ENCODE measurements at regions of chr17 and their contacts with region 1.

Region 1: GRCh38 chr17:67258821-67259468 is 13.9 kb upstream of the HELZ start:
- DNase-seq: no peak
- ATAC-seq: peak; percentile 34
- H3K4me3 Mint-ChIP-seq: peak overlapping the region; percentile 70
- H3K27ac Mint-ChIP-seq: peak overlapping the region; percentile 83
- H3K4me1 Mint-ChIP-seq: peaks cover 26% of the 10 kb centered on the region
- H3K27me3 Mint-ChIP-seq: peaks cover under 1% of the 10 kb centered on the region

Region 2: GRCh38 chr17:67245073-67245755 is 13.7 kb before region 1 on chr17 and contains the start of gene HELZ:
- POLR2A ChIA-PET with region 1: interaction called, 22 read pairs
- DNase-seq: peak; percentile 78
- ATAC-seq: peak; percentile 82
- H3K4me3 Mint-ChIP-seq: peak within 1 kb of the TSS; percentile 89
- H3K27ac Mint-ChIP-seq: peak within 1 kb of the TSS; percentile 89
- H3K4me1 Mint-ChIP-seq: peaks cover 41% of the 10 kb centered on the region
- H3K27me3 Mint-ChIP-seq: peaks cover 6% of the 10 kb centered on the region
- total RNA-seq, gene HELZ: 84.8 to 86.2 TPM

Measured in activated naive CD8-positive, alpha-beta T cell treated with anti-CD3 and anti-CD28 coated beads, Interleukin-2, amount 10 ng/mL, durations not matched to agents 7 days and 5 days (primary cell).